ENCODE measurements at regions of chr14 and their contacts with region 1.

Region 1: GRCh38 chr14:57933349-57933748 is 67.5 kb upstream of the SLC35F4 start:
- DNase-seq: no peak
- ATAC-seq: no peak
- H3K4me3 ChIP-seq: no peak overlapping the region
- H3K4me3 Mint-ChIP-seq: no peak overlapping the region
- H3K27ac ChIP-seq: no peak overlapping the region
- H3K27ac Mint-ChIP-seq: no peak overlapping the region
- H3K4me1 ChIP-seq: peaks cover 0 to 6% of the 10 kb centered on the region in 2 donors
- H3K4me1 Mint-ChIP-seq: peaks cover 12% of the 10 kb centered on the region
- H3K27me3 ChIP-seq: no peaks in the 10 kb centered on the region
- H3K27me3 Mint-ChIP-seq: peaks cover 13% of the 10 kb centered on the region
- CTCF ChIP-seq: no peak

Region 2: DNA sequence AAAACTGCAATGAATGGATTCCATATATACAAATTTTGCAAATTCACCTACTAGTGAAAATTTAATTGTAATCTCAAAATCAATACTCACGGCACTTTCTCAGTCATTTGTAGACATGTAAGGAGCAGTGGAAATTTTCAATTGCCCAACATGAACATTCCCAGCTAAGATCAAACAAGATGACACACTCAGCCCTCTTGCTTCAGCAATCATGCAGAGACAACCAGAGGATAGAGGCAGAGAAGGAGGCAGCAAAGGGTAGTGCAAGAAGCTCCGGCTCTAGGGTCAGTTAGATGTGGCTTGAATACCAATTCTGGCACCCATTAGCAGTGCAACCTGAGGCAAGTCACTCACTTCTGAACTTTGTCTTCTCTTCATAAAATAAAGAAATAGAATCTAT is 24.1 kb after region 1 on chr14:
- CTCF ChIA-PET with region 1: no interaction called
- POLR2A ChIA-PET with region 1: no interaction called
- intact Hi-C with region 1: loop called (anchors 1 kb)
- DNase-seq: no peak
- ATAC-seq: no peak
- H3K4me3 ChIP-seq: no peak overlapping the region
- H3K4me3 Mint-ChIP-seq: no peak overlapping the region
- H3K27ac ChIP-seq: no peak overlapping the region
- H3K27ac Mint-ChIP-seq: no peak overlapping the region
- H3K4me1 ChIP-seq: no peaks in the 10 kb centered on the region
- H3K4me1 Mint-ChIP-seq: no peaks in the 10 kb centered on the region
- H3K27me3 ChIP-seq: no peaks in the 10 kb centered on the region
- H3K27me3 Mint-ChIP-seq: peaks cover 18% of the 10 kb centered on the region
- CTCF ChIP-seq: no peak

Measured in B cell (primary cell).